GM12878 (cell line): ENCODE measurements at regions of chr1 and their contacts with region 1.

Region 1: GRCh38 chr1:228139944-228140656 is at the start of gene GUK1:
- DNase-seq: peak; percentile 98
- ATAC-seq: peak; percentile 88
- H3K4me3 ChIP-seq: peak within 1 kb of the TSS; percentile 88
- H3K27ac ChIP-seq: peak within 1 kb of the TSS; percentile 96
- H3K4me1 ChIP-seq: peaks cover 17% of the 10 kb centered on the region
- H3K27me3 ChIP-seq: no peaks in the 10 kb centered on the region
- CTCF ChIP-seq: peak in 1 of 3 experiments; percentile 23; a peak in 1 of 6 replicates
- EP300 ChIP-seq: 0 out of 4 replicates have a peak, but pooled peaks of 1 of the 2 experiments have one; percentile 10
- POLR2A ChIP-seq: peak; percentile 96
- RAD21 ChIP-seq: no peak
- polyA plus RNA-seq, gene GUK1: 6.3 to 39.2 TPM

Region 2: GRCh38 chr1:228082135-228082891 is 57.8 kb before region 1 on chr1 and contains the start of gene ARF1:
- CTCF ChIA-PET with region 1: no interaction called
- POLR2A ChIA-PET with region 1: interaction called, 6 read pairs
- RAD21 ChIA-PET with region 1: interaction called, 5 read pairs
- SMC1A ChIA-PET with region 1: no interaction called
- in situ Hi-C with region 1: no loop called
- intact Hi-C with region 1: loop called (anchors 2 kb)
- DNase-seq: peak; percentile 60
- ATAC-seq: peak; percentile 87
- H3K4me3 ChIP-seq: peak within 1 kb of the TSS; percentile 94
- H3K27ac ChIP-seq: peak within 1 kb of the TSS; percentile 96
- H3K4me1 ChIP-seq: peaks cover 31% of the 10 kb centered on the region
- H3K27me3 ChIP-seq: no peaks in the 10 kb centered on the region
- CTCF ChIP-seq: no peak
- EP300 ChIP-seq: 0 out of 4 replicates have a peak, but pooled peaks of 1 of the 2 experiments have one; percentile 10
- POLR2A ChIP-seq: peak; percentile 92
- RAD21 ChIP-seq: no peak
- polyA plus RNA-seq, gene ARF1: 48.4 to 97.3 TPM

Region 3: DNA sequence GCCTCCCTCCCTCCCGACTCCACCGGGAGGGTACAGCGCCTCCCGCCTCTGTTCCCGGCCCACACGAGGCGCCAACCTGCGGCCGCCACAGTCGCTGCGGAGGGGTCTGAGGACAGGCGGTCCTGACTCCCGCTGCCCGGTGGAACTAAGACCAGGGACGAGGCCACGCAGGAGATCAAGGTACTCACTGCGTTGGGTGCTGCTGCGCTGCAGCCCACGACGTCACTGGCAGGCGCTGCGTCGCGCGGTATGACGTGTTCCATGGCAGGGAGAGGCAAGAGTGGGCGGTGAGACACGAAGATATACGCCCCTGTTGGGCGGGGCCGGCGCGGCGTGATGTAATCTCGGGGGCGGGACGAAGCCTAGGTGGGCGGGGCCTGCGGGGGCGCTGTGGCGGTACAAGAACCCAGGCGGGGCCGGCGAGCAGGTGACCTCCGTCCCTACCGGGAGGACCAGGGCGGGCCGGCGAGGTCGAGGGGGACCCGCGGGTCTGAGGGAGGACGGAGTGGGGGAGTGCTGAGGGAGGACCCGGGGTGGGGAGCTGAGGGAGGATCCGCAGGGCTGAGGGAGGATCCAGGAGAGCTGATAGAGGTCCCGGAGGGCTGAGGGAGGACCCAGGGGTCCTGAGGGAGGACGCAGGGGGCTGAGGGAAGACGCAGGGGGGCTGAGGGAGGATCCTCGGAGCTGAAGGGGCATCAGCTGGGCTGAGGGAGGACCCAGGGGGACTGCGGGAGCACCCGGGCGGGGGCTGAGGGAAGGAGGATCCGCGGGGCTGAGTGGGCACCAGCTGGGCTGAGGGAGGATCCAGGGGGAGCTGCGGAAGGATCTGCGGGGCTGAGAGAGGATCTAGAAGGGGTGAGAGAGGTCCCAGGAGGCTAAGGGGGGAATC is 30.8 kb before region 1 on chr1 and contains the start of gene MRPL55:
- CTCF ChIA-PET with region 1: interaction called, 5 read pairs
- POLR2A ChIA-PET with region 1: interaction called, 3 read pairs
- RAD21 ChIA-PET with region 1: interaction called, 3 read pairs
- SMC1A ChIA-PET with region 1: no interaction called
- in situ Hi-C with region 1: no loop called
- intact Hi-C with region 1: loop called (anchors 2 kb)
- DNase-seq: peak; percentile 93
- ATAC-seq: peak; percentile 94
- H3K4me3 ChIP-seq: peak within 1 kb of the TSS; percentile 93
- H3K27ac ChIP-seq: peak within 1 kb of the TSS; percentile 73
- H3K4me1 ChIP-seq: peaks cover 11% of the 10 kb centered on the region
- H3K27me3 ChIP-seq: no peaks in the 10 kb centered on the region
- CTCF ChIP-seq: 0 out of 6 replicates have a peak, but pooled peaks of 1 of the 3 experiments have one; percentile 8
- EP300 ChIP-seq: no peak
- POLR2A ChIP-seq: peak; percentile 98
- RAD21 ChIP-seq: no peak
- polyA plus RNA-seq, gene MRPL55: 15.1 to 56.7 TPM

Region 4: GRCh38 chr1:228165372-228166169 is 25.5 kb after region 1 on chr1 and contains the start of gene IBA57:
- CTCF ChIA-PET with region 1: interaction called, 54 read pairs
- POLR2A ChIA-PET with region 1: interaction called, 43 read pairs
- RAD21 ChIA-PET with region 1: interaction called, 13 read pairs
- SMC1A ChIA-PET with region 1: interaction called, 9 read pairs
- in situ Hi-C with region 1: loop called (anchors 5 kb)
- intact Hi-C with region 1: loop called (anchors 1 kb)
- DNase-seq: peak; percentile 93
- ATAC-seq: peak; percentile 90
- H3K4me3 ChIP-seq: peak within 1 kb of the TSS; percentile 95
- H3K27ac ChIP-seq: peak within 1 kb of the TSS; percentile 99
- H3K4me1 ChIP-seq: peaks cover 7% of the 10 kb centered on the region
- H3K27me3 ChIP-seq: no peaks in the 10 kb centered on the region
- CTCF ChIP-seq: peak; percentile 88 to 98 (median 92)
- EP300 ChIP-seq: peak; percentile 8 to 60; a peak in 2 of 4 replicates
- POLR2A ChIP-seq: peak; percentile 95
- RAD21 ChIP-seq: 0 out of 2 replicates have a peak, but pooled peaks have one; percentile 14
- polyA plus RNA-seq, gene IBA57: 0.51 to 0.60 TPM

Region 5: DNA sequence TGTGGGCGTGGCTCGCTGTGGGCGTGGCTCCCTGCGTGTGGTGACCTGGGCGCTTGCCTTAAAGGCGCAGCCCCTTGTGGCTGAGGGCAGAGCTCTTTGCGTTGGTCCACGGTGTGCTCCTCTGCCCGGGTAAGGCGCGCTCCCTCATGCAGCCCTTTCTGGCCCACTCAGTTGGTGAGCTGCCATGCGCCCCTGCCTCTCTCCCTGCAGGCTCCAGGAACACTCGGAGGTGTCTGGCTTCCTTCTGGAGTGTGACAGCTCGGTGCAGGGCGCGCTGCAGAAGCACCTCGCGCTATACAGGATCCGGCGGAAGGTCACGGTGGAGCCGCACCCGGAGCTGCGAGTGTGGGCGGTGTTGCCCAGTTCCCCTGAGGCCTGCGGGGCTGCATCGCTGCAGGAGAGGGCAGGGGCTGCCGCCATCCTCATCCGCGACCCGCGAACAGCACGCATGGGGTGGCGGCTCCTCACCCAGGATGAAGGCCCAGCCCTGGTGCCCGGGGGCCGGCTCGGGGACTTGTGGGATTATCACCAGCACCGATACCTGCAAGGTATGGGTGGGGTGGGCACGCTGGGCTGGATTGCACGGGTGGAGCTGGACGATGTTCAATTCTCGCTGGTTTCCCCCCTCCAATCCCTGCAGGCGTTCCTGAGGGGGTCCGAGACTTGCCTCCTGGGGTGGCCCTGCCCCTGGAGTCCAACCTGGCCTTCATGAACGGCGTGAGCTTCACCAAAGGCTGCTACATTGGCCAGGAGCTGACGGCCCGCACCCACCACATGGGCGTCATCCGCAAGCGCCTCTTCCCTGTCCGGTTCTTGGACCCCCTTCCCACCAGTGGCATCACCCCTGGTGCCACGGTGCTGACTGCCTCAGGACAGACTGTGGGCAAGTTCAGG is 34.6 kb after region 1 on chr1:
- CTCF ChIA-PET with region 1: no interaction called
- POLR2A ChIA-PET with region 1: no interaction called
- RAD21 ChIA-PET with region 1: no interaction called
- SMC1A ChIA-PET with region 1: no interaction called
- in situ Hi-C with region 1: loop called (anchors 5 kb)
- intact Hi-C with region 1: no loop called
- DNase-seq: no peak
- ATAC-seq: peak; percentile 34; the same call in 2 of the 3 replicates
- H3K4me3 ChIP-seq: no peak overlapping the region
- H3K27ac ChIP-seq: no peak overlapping the region
- H3K4me1 ChIP-seq: peaks cover 6% of the 10 kb centered on the region
- H3K27me3 ChIP-seq: no peaks in the 10 kb centered on the region
- CTCF ChIP-seq: no peak
- EP300 ChIP-seq: no peak
- POLR2A ChIP-seq: no peak
- RAD21 ChIP-seq: no peak